ENCODE measurements at regions of chr13 and their contacts with region 1.

Region 1: DNA sequence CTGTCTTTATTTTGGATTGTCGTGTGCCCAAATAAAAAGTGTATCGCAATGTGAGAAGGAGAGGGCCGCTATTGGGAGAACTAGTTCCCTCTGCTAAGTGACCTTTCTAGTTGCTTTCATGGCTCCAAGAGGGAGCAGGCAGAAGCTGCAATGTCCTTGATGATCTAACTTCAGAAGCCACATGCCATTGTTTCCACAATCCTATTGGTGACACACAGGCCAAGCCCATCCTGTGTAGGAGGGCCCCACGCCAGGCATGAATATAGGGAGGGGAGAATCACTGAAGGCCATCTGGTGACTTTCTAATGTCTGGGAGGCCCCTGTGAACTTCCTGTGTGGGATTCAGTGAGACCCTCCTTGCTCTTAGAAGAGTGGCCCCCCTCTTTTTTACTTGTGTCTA is 47.8 kb upstream of the KPNA3 start:
- DNase-seq: no peak
- ATAC-seq: peak in 1 of 8 donors; percentile 48
- H3K4me3 ChIP-seq: no peak overlapping the region
- H3K27ac ChIP-seq: no peak overlapping the region
- H3K4me1 ChIP-seq: peaks cover 0 to 6% (median 0%) of the 10 kb centered on the region in 9 donors
- H3K27me3 ChIP-seq: no peaks in the 10 kb centered on the region
- CTCF ChIP-seq: no peak

Region 2: DNA sequence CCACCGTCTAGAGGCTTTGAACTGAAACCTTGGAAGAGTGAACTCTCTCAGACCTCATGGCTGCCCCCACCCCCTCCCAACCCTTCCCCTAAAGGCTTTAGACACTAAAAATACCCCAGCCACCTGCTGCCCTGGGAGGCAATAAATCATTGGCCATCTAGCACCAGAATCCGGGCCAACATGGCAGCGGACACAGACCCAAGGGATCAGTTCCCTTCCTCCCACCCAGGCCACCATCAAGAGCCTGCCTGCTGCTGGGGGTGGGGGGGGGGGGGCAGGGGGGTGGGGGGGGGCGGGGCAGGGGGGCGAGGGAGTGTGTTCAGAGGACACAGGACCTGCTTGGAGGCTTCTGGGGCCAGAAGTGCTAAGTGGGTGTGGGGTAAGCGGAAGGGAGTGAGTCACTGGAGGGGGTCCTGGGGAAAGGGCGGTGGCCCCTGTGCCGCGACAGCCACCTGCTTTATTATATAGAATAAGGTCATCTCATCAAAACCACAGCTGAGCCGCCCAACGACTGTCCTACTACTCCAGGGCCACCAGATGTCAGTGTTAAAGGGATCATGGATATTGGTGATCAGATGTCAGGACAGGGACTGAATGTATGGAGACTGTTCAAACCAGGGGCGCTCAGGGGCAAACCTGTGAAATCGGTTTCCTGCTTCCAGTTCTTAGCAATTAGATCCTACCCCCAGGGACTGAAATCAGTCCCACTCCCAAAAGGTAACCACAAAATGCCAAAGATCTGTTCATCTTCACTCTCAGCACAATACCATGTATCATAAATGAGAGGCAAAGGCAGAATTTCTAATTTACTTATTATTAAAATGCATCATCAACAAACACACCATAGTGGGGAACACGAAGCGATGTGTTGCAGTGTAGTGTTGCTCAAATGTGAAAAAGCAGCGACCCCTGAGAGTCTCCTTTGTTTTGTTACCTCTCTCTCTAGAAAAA is 187.6 kb before region 1 on chr13:
- intact Hi-C with region 1: loop called in 5 of 10 experiments (anchors 5 kb)
- DNase-seq: no peak
- ATAC-seq: peak in 5 of 8 donors; percentile 48 to 65 (median 55)
- H3K4me3 ChIP-seq: no peak overlapping the region
- H3K27ac ChIP-seq: no peak overlapping the region
- H3K4me1 ChIP-seq: peaks cover 0 to 20% (median 0%) of the 10 kb centered on the region in 9 donors
- H3K27me3 ChIP-seq: no peaks in the 10 kb centered on the region
- CTCF ChIP-seq: peak in 8 of 9 donors; percentile 11 to 61 (median 52)

Region 3: GRCh38 chr13:49669735-49670309 is 170.4 kb before region 1 on chr13:
- intact Hi-C with region 1: loop called in 6 of 10 experiments (anchors 5 to 10 kb)
- DNase-seq: peak; percentile 30 to 33
- ATAC-seq: peak; percentile 88 to 97 (median 92)
- H3K4me3 ChIP-seq: no peak overlapping the region
- H3K27ac ChIP-seq: no peak overlapping the region
- H3K4me1 ChIP-seq: peaks cover 0 to 14% (median 0%) of the 10 kb centered on the region in 9 donors
- H3K27me3 ChIP-seq: no peaks in the 10 kb centered on the region
- CTCF ChIP-seq: peak; percentile 59 to 79 (median 72)

Region 4: DNA sequence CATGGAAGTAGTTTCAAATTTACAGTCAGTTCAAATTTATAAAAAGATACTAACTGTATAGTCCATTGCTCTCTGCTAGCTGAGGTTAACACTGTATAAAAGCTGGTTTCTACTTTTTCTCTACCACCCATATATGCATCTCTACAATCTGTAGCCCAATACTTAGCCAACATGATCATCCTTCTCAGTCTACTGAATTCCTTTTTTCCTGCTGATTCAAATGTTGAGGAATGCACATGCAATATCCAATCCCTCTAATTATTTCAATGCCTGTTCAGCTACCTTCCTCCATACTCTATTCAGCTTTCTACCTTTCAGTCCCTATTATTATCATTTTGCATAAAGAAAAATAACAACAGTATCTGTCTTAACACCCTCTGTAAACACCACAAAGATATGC is 63.4 kb before region 1 on chr13:
- intact Hi-C with region 1: no loop called
- DNase-seq: no peak
- ATAC-seq: no peak
- H3K4me3 ChIP-seq: no peak overlapping the region
- H3K27ac ChIP-seq: no peak overlapping the region
- H3K4me1 ChIP-seq: peaks cover 0 to 51% (median 24%) of the 10 kb centered on the region in 9 donors
- H3K27me3 ChIP-seq: no peaks in the 10 kb centered on the region
- CTCF ChIP-seq: no peak

Region 5: GRCh38 chr13:49792550-49793324 is 47.5 kb before region 1 on chr13 and contains the start of gene KPNA3:
- intact Hi-C with region 1: loop called in 1 of 10 experiments (anchors 10 kb)
- DNase-seq: peak; percentile 95 to 97
- ATAC-seq: peak; percentile 95 to 98 (median 98)
- H3K4me3 ChIP-seq: peak within 1 kb of the TSS; percentile 66 to 98 (median 86)
- H3K27ac ChIP-seq: peak within 1 kb of the TSS; percentile 88 to 99 (median 94)
- H3K4me1 ChIP-seq: peaks cover 3 to 46% (median 33%) of the 10 kb centered on the region in 9 donors
- H3K27me3 ChIP-seq: no peaks in the 10 kb centered on the region
- CTCF ChIP-seq: peak in 6 of 9 donors; percentile 8 to 46 (median 34)
- total RNA-seq, gene KPNA3: 47.7 to 79.1 (median 56.7) TPM